Activated CD4-positive, alpha-beta memory T cell treated with anti-CD3 and anti-CD28 coated beads for 36 hours (primary cell): ENCODE measurements at regions of chr10 and their contacts with region 1.

Region 1: DNA sequence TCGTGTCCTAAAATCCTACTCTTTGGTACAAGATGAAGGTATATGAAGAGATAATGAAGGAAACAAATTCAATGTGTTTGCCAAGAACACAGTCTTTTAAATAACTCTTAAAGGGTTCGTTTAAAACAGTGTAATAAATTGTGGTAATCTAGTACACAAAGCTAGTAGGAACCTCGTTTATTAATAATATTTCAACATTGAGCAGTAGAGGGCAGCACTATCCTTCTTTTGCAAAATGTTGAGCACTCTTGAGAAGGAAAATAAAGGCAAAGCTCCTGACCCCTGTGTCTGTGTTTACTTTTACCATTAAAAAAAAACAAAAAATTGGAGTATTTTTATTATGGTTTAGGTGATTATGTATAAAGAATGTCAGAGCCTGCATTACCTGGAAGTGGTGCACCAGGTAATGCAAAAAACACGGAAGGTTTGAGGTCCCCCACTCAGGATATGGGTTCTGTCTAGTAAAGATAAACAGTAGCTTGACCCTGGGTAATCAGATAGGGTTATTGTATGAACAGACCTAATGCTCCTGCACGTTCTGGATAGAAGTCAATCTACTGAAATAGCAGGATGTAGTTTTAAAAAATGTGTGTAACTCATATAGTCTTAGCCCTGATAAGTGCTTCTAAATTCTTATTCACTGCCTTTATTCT is 5.7 kb upstream of the GOT1 start:
- DNase-seq: no peak
- H3K4me3 Mint-ChIP-seq: no peak overlapping the region
- H3K27ac Mint-ChIP-seq: no peak overlapping the region
- H3K4me1 Mint-ChIP-seq: peaks cover 18% of the 10 kb centered on the region
- H3K27me3 Mint-ChIP-seq: no peaks in the 10 kb centered on the region

Region 2: GRCh38 chr10:99346247-99346646 is 89.9 kb before region 1 on chr10:
- CTCF ChIA-PET with region 1: no interaction called
- POLR2A ChIA-PET with region 1: no interaction called
- intact Hi-C with region 1: no loop called
- DNase-seq: no peak
- H3K4me3 Mint-ChIP-seq: no peak overlapping the region
- H3K27ac Mint-ChIP-seq: no peak overlapping the region
- H3K4me1 Mint-ChIP-seq: no peaks in the 10 kb centered on the region
- H3K27me3 Mint-ChIP-seq: peaks cover 2% of the 10 kb centered on the region

Region 3: GRCh38 chr10:99450624-99451498 is 14.7 kb after region 1 on chr10:
- CTCF ChIA-PET with region 1: interaction called, 10 read pairs
- POLR2A ChIA-PET with region 1: no interaction called
- intact Hi-C with region 1: no loop called
- DNase-seq: no peak
- H3K4me3 Mint-ChIP-seq: no peak overlapping the region
- H3K27ac Mint-ChIP-seq: no peak overlapping the region
- H3K4me1 Mint-ChIP-seq: no peaks in the 10 kb centered on the region
- H3K27me3 Mint-ChIP-seq: peaks cover 15% of the 10 kb centered on the region

Region 4: GRCh38 chr10:99497343-99498025 is 61.4 kb after region 1 on chr10:
- CTCF ChIA-PET with region 1: no interaction called
- POLR2A ChIA-PET with region 1: no interaction called
- intact Hi-C with region 1: no loop called
- DNase-seq: no peak
- H3K4me3 Mint-ChIP-seq: no peak overlapping the region
- H3K27ac Mint-ChIP-seq: no peak overlapping the region
- H3K4me1 Mint-ChIP-seq: no peaks in the 10 kb centered on the region
- H3K27me3 Mint-ChIP-seq: peaks cover 16% of the 10 kb centered on the region

Region 5: GRCh38 chr10:99548041-99548530 is 112.0 kb after region 1 on chr10:
- CTCF ChIA-PET with region 1: interaction called, 21 read pairs
- POLR2A ChIA-PET with region 1: no interaction called
- intact Hi-C with region 1: no loop called
- DNase-seq: peak; percentile 33
- H3K4me3 Mint-ChIP-seq: no peak overlapping the region
- H3K27ac Mint-ChIP-seq: no peak overlapping the region
- H3K4me1 Mint-ChIP-seq: no peaks in the 10 kb centered on the region
- H3K27me3 Mint-ChIP-seq: peaks cover 38% of the 10 kb centered on the region